Activated CD8-positive, alpha-beta T cell treated with anti-CD3 and anti-CD28 coated beads, Interleukin-2, amount 10 ng/mL, durations not matched to agents 7 days and 5 days (primary cell): ENCODE measurements at regions of chr17 and their contacts with region 1.

Region 1: GRCh38 chr17:75109407-75110233 is at the start of gene ARMC7:
- DNase-seq: peak; percentile 92
- ATAC-seq: peak; percentile 86
- H3K4me3 Mint-ChIP-seq: peak within 1 kb of the TSS; percentile 92
- H3K27ac Mint-ChIP-seq: peak within 1 kb of the TSS; percentile 87
- H3K4me1 Mint-ChIP-seq: peaks cover 48% of the 10 kb centered on the region
- H3K27me3 Mint-ChIP-seq: no peaks in the 10 kb centered on the region
- total RNA-seq, gene ARMC7: 16.1 to 17.0 TPM

Region 2: GRCh38 chr17:75024686-75025397 is 84.8 kb before region 1 on chr17:
- CTCF ChIA-PET with region 1: no interaction called
- POLR2A ChIA-PET with region 1: no interaction called
- DNase-seq: peak; percentile 58
- ATAC-seq: peak; percentile 53
- H3K4me3 Mint-ChIP-seq: peak overlapping the region; percentile 27
- H3K27ac Mint-ChIP-seq: peak overlapping the region; percentile 44
- H3K4me1 Mint-ChIP-seq: peaks cover 21% of the 10 kb centered on the region
- H3K27me3 Mint-ChIP-seq: peaks cover 8% of the 10 kb centered on the region

Region 3: DNA sequence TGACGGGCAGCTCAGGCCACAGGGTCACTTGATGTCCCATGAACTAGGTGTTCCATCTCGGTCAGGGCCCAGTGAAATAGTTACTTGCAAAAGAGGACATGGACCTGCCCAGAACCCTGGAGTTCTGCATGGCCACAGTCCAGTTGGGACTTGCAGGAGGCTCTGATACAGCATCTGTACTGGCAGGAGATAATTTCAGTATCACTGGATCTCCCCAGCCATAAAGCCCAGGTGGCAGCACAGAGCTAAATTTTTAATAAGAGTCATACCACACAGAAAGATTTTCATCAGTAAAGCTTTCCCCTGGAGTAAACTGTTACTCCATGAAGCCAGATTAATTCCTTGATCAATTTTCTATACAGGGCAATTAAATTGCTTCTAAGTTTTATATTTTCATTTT is 39.8 kb before region 1 on chr17:
- CTCF ChIA-PET with region 1: interaction called, 13 read pairs
- POLR2A ChIA-PET with region 1: interaction called, 4 read pairs
- DNase-seq: no peak
- ATAC-seq: no peak
- H3K4me3 Mint-ChIP-seq: no peak overlapping the region
- H3K27ac Mint-ChIP-seq: peak overlapping the region; percentile 68
- H3K4me1 Mint-ChIP-seq: peaks cover 38% of the 10 kb centered on the region
- H3K27me3 Mint-ChIP-seq: no peaks in the 10 kb centered on the region

Region 4: GRCh38 chr17:75142239-75142971 is 32.8 kb after region 1 on chr17:
- CTCF ChIA-PET with region 1: interaction called, 16 read pairs
- POLR2A ChIA-PET with region 1: no interaction called
- DNase-seq: no peak
- ATAC-seq: no peak
- H3K4me3 Mint-ChIP-seq: no peak overlapping the region
- H3K27ac Mint-ChIP-seq: no peak overlapping the region
- H3K4me1 Mint-ChIP-seq: peaks cover 27% of the 10 kb centered on the region
- H3K27me3 Mint-ChIP-seq: no peaks in the 10 kb centered on the region

Region 5: DNA sequence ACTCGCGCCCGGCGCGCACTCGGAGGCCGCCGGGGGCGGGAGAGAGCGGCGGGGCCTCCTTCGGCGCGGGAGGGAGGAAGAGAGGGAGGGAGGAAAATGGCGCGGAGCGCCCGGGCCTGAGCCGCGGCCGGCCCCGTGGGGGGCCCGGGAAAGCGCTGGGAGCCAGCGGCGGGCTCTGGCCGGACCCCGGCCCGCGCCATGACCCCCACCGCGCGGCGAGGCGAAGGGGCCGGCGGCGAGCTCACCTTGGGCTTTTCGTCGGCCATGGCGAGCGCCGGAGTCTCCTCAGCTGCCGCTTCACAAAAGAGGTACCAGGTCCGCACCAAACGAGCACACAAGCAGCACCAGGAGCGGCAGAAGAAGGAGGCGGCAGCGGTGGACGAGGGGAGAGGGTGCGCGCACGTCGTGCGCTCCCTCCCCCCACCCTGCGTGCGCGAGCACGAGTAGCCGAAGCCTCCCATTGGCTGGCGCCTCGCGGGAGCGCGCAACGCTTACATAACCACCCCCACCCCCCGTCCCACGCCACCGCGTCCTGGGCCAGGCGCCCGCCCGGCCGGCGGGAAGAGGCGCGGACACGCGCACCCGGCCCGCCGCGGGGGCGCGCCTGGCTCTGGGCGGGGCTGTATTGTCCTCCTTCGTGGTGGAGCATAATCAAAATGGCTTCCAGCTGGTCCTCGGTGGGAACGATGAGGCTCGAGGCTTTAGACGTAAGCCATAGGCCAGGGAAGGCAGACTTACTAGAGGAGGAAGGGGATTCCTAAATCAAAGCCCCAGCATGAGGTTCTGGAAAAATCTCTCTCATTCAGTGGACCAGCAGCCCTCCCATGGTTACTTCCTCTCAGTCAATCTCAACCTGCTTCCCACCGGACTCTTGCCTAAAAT is 73.2 kb after region 1 on chr17 and contains the start of gene SUMO2:
- CTCF ChIA-PET with region 1: interaction called, 18 read pairs
- POLR2A ChIA-PET with region 1: interaction called, 5 read pairs
- DNase-seq: peak; percentile 96
- ATAC-seq: peak; percentile 82
- H3K4me3 Mint-ChIP-seq: peak within 1 kb of the TSS; percentile 90
- H3K27ac Mint-ChIP-seq: peak within 1 kb of the TSS; percentile 98
- H3K4me1 Mint-ChIP-seq: peaks cover 44% of the 10 kb centered on the region
- H3K27me3 Mint-ChIP-seq: no peaks in the 10 kb centered on the region
- total RNA-seq, gene SUMO2: 491 to 520 TPM

Region 6: GRCh38 chr17:75238684-75239191 is 129.1 kb after region 1 on chr17:
- CTCF ChIA-PET with region 1: interaction called, 22 read pairs
- POLR2A ChIA-PET with region 1: interaction called, 3 read pairs
- DNase-seq: peak; percentile 76
- ATAC-seq: peak; percentile 86
- H3K4me3 Mint-ChIP-seq: no peak overlapping the region
- H3K27ac Mint-ChIP-seq: no peak overlapping the region
- H3K4me1 Mint-ChIP-seq: peaks cover 23% of the 10 kb centered on the region
- H3K27me3 Mint-ChIP-seq: no peaks in the 10 kb centered on the region

Region 7: GRCh38 chr17:75412455-75413317 is 303.1 kb after region 1 on chr17:
- CTCF ChIA-PET with region 1: interaction called, 12 read pairs
- POLR2A ChIA-PET with region 1: interaction called, 3 read pairs
- DNase-seq: peak; percentile 84
- ATAC-seq: peak; percentile 83
- H3K4me3 Mint-ChIP-seq: peak overlapping the region; percentile 55
- H3K27ac Mint-ChIP-seq: peak overlapping the region; percentile 72
- H3K4me1 Mint-ChIP-seq: peaks cover 39% of the 10 kb centered on the region
- H3K27me3 Mint-ChIP-seq: peaks cover 2% of the 10 kb centered on the region

Region 8: DNA sequence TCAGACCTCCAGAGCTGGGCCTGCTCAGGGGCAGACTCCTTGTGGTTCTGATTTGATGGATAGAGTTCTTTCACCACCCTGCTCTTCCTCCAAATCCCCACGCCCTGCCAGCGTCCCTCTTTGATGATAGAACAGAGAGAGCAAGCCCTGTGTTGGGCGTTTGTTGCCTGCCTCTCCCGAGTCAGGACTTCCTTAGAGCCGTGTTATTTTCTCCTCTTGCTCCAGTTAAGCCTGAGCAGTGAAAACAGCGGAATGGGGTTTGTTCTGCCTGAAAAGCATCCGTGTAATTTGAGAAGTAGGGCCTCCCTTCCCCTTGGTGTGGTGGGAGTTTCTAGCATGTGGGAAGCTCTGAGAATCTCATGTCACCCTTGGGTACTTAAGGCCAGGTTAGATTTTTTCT is 368.9 kb after region 1 on chr17:
- CTCF ChIA-PET with region 1: no interaction called
- POLR2A ChIA-PET with region 1: no interaction called
- DNase-seq: no peak
- ATAC-seq: no peak
- H3K4me3 Mint-ChIP-seq: no peak overlapping the region
- H3K27ac Mint-ChIP-seq: no peak overlapping the region
- H3K4me1 Mint-ChIP-seq: peaks cover 4% of the 10 kb centered on the region
- H3K27me3 Mint-ChIP-seq: no peaks in the 10 kb centered on the region